Activated CD4-positive, alpha-beta T cell treated with anti-CD3 and anti-CD28 coated beads for 36 hours (primary cell): ENCODE measurements at regions of chr3 and their contacts with region 1.

Region 1: DNA sequence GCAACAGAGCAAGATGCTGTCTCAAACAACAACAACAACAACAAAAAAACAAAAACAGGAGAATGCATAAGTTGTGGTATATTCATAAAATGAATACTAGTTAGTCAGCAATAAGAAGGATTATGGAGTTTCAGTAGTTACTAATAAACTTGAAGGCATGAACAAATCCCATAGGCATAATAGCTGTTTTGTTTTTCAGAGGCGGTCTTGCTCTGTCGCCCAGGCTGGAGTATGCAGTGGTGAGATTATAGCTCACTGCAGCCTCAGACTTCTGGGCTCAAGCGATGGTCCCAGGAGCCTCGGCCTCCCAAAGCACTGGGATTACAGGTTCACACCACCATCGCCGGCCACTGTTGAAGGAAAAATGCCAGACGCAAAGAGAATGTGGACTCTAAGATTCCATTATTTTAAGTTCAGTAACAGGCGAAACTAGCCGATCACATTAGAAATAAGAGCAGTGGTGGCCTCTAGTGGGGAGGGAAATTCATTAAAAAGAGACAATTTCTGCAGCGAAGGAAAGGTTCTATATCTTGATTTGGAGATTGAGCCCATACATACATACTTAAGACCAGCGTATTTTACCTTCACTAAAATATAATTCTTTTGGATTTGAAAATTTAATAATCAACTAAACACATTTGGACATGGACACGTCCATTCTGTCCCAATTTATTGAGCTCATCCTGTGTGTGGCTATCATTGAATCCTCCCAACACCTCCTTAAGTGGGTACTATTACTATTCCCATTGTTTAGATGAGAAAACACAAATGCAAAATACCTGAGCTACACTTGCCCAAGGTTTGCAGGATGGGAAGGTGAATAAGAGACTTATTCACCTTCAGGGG is 27.4 kb upstream of the HDAC11 start:
- DNase-seq: peak; percentile 56
- ATAC-seq: no peak
- H3K4me3 Mint-ChIP-seq: peak overlapping the region; percentile 70
- H3K27ac Mint-ChIP-seq: peak overlapping the region; percentile 89
- H3K4me1 Mint-ChIP-seq: peaks cover 14% of the 10 kb centered on the region
- H3K27me3 Mint-ChIP-seq: no peaks in the 10 kb centered on the region

Region 2: DNA sequence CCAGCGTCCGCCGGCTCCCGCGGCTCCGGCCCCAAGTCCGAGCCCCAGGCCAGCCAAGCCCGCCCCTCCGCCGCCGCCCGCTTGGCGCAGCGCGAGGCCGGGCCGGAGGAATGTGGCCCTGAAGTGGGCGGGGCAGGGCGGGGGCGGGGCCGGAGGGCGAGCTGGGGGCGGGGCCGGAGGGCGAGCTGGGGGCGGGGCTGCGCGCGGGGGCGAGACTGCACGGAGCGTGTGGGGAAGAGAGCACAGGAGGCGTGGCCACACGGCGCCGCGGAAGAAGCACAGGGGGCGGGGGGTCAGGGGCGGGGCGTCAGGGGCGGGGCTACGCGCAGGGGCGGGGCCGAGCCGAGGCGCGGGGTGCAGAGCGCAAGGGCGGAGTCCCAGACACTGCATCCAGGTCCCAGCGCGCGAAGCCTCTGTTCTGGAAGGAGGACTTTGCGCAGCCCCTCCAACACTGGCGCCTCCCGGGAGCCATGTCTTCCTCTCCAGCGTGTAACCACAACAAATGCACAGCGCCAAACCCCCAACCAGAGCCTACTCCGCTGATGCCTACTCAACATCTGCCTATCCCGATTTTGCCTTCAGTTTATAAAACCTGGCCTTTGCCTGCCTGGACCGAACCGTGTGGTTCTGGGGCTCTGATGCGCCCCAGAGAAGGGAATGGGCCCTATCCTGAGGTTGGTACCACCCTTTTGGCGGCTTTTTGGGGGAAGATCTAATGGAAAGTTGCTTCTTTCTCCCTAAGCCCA is 484.9 kb before region 1 on chr3:
- CTCF ChIA-PET with region 1: no interaction called
- POLR2A ChIA-PET with region 1: no interaction called
- intact Hi-C with region 1: loop called in 1 of 2 experiments (anchors 1 kb)
- DNase-seq: peak; percentile 95
- ATAC-seq: peak; percentile 86
- H3K4me3 Mint-ChIP-seq: peak overlapping the region; percentile 66
- H3K27ac Mint-ChIP-seq: peak overlapping the region; percentile 52
- H3K4me1 Mint-ChIP-seq: peaks cover 59% of the 10 kb centered on the region
- H3K27me3 Mint-ChIP-seq: no peaks in the 10 kb centered on the region

Region 3: GRCh38 chr3:13091898-13092611 is 360.7 kb before region 1 on chr3:
- CTCF ChIA-PET with region 1: interaction called, 13 read pairs
- POLR2A ChIA-PET with region 1: no interaction called
- intact Hi-C with region 1: loop called (anchors 1 to 5 kb)
- DNase-seq: peak; percentile 90
- ATAC-seq: peak; percentile 92
- H3K4me3 Mint-ChIP-seq: no peak overlapping the region
- H3K27ac Mint-ChIP-seq: no peak overlapping the region
- H3K4me1 Mint-ChIP-seq: peaks cover 2% of the 10 kb centered on the region
- H3K27me3 Mint-ChIP-seq: no peaks in the 10 kb centered on the region

Region 4: GRCh38 chr3:13346481-13347389 is 106.0 kb before region 1 on chr3:
- CTCF ChIA-PET with region 1: interaction called, 61 read pairs
- POLR2A ChIA-PET with region 1: interaction called, 4 read pairs
- intact Hi-C with region 1: loop called (anchors 1 kb)
- DNase-seq: peak; percentile 89
- ATAC-seq: peak; percentile 90
- H3K4me3 Mint-ChIP-seq: no peak overlapping the region
- H3K27ac Mint-ChIP-seq: peak overlapping the region; percentile 90
- H3K4me1 Mint-ChIP-seq: peaks cover 55% of the 10 kb centered on the region
- H3K27me3 Mint-ChIP-seq: no peaks in the 10 kb centered on the region

Region 5: GRCh38 chr3:13414040-13414729 is 38.5 kb before region 1 on chr3:
- CTCF ChIA-PET with region 1: interaction called, 43 read pairs
- POLR2A ChIA-PET with region 1: interaction called, 7 read pairs
- intact Hi-C with region 1: loop called in 1 of 2 experiments (anchors 1 kb)
- DNase-seq: peak; percentile 83
- ATAC-seq: peak; percentile 86
- H3K4me3 Mint-ChIP-seq: peak overlapping the region; percentile 69
- H3K27ac Mint-ChIP-seq: peak overlapping the region; percentile 96
- H3K4me1 Mint-ChIP-seq: peaks cover 51% of the 10 kb centered on the region
- H3K27me3 Mint-ChIP-seq: no peaks in the 10 kb centered on the region

Region 6: DNA sequence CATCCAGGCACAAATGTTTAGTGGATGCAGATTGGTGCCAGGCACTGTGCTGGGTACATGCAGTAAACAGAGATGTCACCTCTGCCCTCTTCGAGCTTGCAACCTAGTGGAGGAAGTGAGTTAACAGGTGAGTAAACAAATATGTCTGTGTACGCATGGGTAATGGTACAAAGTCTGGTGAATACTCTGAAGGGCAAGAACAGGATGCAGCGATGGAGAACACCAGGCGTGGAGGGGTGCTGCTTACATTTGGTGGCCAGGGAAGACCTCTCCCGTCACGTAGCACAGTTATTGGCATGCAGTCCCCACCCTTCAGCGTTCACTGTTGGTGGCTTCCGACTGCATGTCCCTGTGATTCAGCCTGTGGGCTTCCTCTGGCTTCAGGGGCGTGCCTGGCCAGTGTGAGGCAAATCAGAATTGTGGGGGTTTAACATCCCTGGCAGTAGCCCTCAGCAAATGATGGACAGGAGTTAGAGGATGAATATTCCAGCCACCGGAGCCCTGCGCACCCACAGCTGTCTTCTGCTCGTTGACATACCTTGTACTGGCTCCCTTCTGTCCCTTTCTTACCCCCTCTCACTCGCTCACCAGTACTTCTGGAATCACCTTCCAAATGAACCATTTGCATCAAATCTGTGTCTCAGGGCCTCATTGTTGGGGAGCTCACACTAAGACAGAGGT is 18.3 kb after region 1 on chr3:
- CTCF ChIA-PET with region 1: interaction called, 15 read pairs
- POLR2A ChIA-PET with region 1: no interaction called
- intact Hi-C with region 1: no loop called
- DNase-seq: no peak
- ATAC-seq: no peak
- H3K4me3 Mint-ChIP-seq: no peak overlapping the region
- H3K27ac Mint-ChIP-seq: no peak overlapping the region
- H3K4me1 Mint-ChIP-seq: no peaks in the 10 kb centered on the region
- H3K27me3 Mint-ChIP-seq: no peaks in the 10 kb centered on the region

Region 7: DNA sequence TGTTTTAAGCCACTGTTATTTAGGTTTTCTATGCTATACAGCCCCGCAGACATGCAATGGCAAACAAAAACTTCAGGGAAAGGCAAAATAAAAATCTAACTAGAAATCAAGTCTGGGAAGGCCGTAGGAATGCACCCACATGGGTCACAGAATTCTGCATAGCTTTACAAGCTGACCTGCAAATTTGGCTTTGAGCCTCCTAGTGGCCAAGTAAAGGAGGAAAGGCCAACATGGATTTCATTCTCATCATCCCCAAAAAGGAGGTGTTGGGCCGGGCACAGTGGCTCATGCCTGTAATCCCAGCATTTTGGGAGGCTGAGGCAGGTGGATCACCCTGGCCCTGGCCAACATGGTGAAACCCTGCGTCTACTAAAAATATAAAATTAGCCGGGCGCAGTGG is 220.5 kb after region 1 on chr3:
- CTCF ChIA-PET with region 1: no interaction called
- POLR2A ChIA-PET with region 1: no interaction called
- intact Hi-C with region 1: no loop called
- DNase-seq: no peak
- ATAC-seq: no peak
- H3K4me3 Mint-ChIP-seq: no peak overlapping the region
- H3K27ac Mint-ChIP-seq: no peak overlapping the region
- H3K4me1 Mint-ChIP-seq: no peaks in the 10 kb centered on the region
- H3K27me3 Mint-ChIP-seq: peaks cover 7% of the 10 kb centered on the region